GM10248 (cell line): ENCODE measurements at regions of chr13 and their contacts with region 1.

Region 1: DNA sequence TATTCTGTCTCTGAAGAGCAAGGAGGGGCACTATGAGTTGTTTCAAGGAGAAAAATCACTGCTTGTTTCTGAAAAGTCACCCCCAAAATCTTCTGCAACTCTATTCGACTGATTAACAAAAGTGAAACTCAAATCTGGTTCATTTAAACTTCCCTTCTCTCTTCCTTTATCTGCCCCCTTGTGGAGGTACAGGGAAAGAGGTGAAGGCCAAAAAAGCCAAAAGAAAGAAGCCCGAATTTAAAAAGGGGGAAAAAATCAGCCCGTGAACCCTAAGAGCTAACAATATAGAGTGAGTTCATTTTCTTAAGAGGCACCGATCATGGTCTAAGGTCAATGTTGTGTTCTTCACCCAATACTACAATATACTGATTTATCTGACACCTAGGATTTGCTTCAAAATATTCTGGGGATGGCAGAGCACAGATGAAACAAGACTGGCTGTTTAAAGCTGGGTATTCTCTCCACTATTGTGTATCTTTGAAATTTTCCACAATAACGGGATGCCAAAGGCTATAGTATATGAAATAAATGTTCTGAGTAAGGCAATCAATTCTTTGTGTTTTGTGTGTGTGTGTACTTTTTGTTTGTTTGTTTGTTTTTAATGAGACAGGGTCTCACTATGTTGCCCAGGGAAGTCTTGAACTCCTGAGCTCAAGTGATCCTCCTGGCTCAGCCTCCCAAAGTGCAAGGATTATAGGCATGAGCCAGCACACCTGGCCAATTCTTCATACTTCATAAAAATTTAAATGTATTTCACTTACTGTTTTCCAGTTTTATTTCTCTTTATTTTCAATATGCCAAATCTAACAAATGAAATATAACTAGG is 55.0 kb upstream of the EEF1AKMT1 start:
- DNase-seq: peak; percentile 44
- CTCF ChIP-seq: peak; percentile 76

Region 2: GRCh38 chr13:20106742-20107141 is 722.0 kb before region 1 on chr13:
- CTCF ChIA-PET with region 1: no interaction called
- POLR2A ChIA-PET with region 1: no interaction called
- DNase-seq: no peak
- CTCF ChIP-seq: no peak

Region 3: DNA sequence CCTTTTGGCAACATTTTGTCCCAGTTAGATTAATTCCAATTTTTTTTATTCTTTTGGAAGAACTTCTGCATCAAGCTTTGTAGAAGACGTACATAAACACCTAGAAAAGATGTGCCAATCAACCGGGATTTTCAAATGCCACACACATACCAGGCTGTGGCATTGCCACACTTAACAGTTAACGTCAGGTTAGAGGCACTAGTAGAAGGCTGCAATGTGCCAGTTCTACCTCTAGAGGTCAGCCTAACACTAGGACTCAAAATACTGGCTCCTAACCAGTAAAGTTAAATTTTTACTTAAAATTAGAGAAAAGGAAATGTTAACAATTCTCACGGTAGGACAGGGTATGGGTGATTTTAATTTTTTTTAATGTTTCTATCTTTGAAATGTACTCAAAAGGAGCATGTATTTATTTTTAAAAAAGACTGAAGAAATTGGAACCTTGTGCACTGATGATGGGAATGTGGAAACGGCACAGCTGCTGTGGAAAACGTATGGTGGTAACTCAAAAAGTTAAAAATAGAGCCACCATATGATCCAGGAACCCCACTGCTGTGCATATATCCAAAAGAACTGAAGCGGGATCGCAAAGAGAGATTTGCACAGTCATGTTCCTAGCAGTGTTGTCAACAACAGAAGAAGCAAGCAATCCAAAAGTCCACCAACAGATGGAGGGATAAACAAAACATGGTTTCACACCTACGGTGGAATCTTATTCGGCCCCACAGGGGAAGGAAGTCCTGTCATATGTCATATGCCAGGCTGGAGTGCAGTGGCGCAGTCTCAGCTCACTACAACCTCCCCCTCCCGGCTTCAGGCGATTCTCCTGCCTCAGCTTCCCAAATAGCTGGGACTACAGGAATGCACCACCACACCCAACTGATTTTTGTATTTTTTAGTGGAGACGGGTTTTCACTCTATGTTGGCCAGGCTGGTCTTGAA is 333.4 kb before region 1 on chr13:
- CTCF ChIA-PET with region 1: interaction called, 123 read pairs
- POLR2A ChIA-PET with region 1: no interaction called
- DNase-seq: peak; percentile 72
- CTCF ChIP-seq: peak; percentile 86

Region 4: DNA sequence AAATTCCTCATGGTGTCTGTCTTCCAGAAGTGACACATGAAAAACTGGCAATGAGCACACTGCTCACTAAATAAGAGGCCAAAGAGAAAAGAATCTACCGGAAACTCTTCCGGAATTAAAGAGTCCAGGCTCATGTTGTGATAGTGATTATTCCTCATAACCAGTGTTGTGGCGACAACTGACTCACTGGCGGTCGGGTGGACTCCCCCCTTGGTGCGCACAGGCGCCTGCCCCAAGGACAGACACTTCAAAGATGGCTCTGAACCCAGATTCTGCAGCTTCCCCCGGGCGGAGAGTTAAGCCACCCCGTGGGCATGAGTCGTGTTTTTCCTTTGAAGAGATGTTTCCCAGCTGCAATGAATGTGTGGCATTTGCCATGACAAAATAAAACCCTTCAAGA is 115.0 kb before region 1 on chr13:
- CTCF ChIA-PET with region 1: interaction called, 10 read pairs
- POLR2A ChIA-PET with region 1: no interaction called
- DNase-seq: no peak
- CTCF ChIP-seq: no peak

Region 5: DNA sequence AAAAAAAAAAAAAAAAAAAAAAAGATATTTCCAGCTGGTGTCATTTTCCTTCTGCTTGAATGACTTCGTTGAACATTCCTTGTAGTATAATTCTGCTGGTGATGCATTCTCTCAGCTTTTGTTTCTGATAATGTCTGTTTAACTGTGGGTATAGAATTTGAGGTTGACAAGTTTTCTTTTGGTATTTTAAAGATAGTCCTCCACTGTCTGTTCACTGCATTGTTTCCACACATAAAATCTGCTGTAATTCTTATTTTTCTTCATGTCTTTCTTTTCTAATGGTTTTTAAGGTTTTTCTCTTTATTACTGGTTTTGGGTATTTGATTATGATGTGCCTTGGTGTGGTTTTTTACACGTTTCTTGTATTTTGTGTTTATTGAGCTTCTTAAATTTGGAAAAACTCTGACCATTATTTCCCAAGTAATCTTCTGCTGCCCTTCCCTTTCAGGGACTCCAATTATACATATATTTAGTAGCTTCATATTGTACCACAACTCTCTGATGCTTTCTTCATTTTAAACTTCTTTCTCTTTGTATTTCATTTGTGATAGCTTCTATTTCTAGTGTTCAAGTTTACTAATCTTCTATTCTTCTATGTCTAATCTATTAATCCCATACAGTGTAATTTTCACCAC is 61.3 kb before region 1 on chr13:
- CTCF ChIA-PET with region 1: no interaction called
- POLR2A ChIA-PET with region 1: no interaction called
- DNase-seq: no peak
- CTCF ChIP-seq: no peak

Region 6: DNA sequence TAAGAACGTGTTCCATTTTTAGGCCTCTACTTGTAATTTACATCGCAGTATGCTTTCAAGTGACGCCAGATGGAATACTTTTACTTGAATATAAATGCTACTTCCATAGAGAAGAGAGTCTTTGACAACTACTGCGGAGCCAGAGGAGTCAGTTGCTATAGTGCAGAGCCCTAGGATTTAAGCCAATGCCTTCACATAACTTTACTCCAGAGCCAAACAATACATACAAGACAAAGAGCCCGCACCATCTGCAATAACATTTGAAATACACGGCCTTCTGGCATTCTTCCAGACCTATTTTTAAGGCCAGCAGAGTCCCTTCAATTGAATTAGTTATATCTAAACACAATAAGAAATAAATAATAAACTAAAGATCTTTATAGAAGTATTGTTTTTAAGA is 14.4 kb after region 1 on chr13:
- CTCF ChIA-PET with region 1: interaction called, 38 read pairs
- POLR2A ChIA-PET with region 1: no interaction called
- DNase-seq: no peak
- CTCF ChIP-seq: no peak

Region 7: GRCh38 chr13:20860844-20861243 is 32.1 kb after region 1 on chr13:
- CTCF ChIA-PET with region 1: interaction called, 12 read pairs
- POLR2A ChIA-PET with region 1: no interaction called
- DNase-seq: no peak
- CTCF ChIP-seq: no peak

Region 8: DNA sequence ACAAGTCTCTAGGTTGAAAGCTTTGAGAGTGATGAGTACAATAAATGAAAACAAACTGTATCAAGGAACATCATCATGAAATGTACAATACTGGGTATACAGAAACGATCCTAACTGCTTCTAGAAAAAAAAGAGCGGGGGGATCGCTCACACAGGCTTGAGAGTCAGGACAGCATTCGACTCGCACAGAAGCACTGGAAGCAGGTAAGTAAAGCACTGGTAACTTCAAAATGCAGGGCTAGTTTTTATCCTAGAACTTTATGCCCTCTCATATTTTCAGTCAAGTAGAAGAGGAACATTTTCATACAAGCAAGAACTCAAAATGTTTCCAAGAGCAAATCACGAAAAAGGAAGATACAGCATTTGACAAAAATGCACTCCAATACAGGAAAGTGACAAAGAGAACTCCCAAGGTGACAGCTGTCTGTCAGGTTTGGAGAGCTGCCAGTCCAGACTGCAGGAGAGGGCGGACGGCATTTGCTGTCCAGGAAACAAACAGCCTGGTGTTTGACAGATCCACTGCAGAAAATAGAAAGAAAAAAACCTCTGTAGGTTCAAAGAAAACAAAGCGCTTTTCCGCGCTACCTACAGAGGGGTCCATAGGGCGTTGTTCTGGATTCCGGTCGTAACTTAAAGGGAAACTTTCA is 132.0 kb after region 1 on chr13:
- CTCF ChIA-PET with region 1: no interaction called
- POLR2A ChIA-PET with region 1: no interaction called
- DNase-seq: no peak
- CTCF ChIP-seq: no peak